Activated CD4-positive, alpha-beta memory T cell treated with anti-CD3 and anti-CD28 coated beads for 36 hours (primary cell): ENCODE measurements at regions of chr3 and their contacts with region 1.

Region 1: DNA sequence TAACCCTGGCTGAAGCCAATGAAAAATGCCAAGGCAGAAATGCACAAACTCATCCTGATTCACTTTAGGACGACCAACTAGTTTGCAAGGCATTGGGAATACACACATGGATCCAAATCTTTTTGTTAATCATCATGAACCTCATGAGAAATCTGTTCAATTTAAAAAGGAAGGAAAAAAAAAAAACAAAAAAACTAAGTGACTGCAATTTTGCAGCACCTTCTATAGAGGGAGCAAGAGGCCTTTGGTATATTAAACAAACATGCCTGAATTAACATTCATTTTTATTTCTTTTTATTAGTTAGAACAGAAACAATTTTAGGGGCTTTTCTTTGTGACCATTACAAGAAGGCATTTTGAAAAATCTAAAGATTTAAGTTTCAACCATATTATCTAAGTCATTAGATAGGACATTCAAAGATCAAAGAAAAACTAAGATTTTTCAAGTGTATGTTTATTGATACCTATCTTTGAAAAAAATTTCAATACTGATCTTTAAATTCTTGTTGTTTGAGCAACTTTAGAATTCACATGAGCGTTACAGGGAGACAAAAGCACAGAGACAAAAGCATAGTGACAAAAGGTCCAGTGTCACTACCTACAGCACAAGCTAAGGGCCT is 182.4 kb downstream of the CBLB start:
- DNase-seq: no peak
- H3K4me3 Mint-ChIP-seq: no peak overlapping the region
- H3K27ac Mint-ChIP-seq: peak overlapping the region; percentile 23
- H3K4me1 Mint-ChIP-seq: peaks cover 24% of the 10 kb centered on the region
- H3K27me3 Mint-ChIP-seq: no peaks in the 10 kb centered on the region

Region 2: GRCh38 chr3:106206146-106206545 is 519.8 kb after region 1 on chr3:
- CTCF ChIA-PET with region 1: no interaction called
- POLR2A ChIA-PET with region 1: no interaction called
- intact Hi-C with region 1: loop called (anchors 2 kb)
- DNase-seq: peak; percentile 24
- H3K4me3 Mint-ChIP-seq: peak overlapping the region; percentile 9
- H3K27ac Mint-ChIP-seq: peak overlapping the region; percentile 93
- H3K4me1 Mint-ChIP-seq: peaks cover 48% of the 10 kb centered on the region
- H3K27me3 Mint-ChIP-seq: no peaks in the 10 kb centered on the region